ENCODE measurements at regions of chr19 and their contacts with region 1.

Region 1: DNA sequence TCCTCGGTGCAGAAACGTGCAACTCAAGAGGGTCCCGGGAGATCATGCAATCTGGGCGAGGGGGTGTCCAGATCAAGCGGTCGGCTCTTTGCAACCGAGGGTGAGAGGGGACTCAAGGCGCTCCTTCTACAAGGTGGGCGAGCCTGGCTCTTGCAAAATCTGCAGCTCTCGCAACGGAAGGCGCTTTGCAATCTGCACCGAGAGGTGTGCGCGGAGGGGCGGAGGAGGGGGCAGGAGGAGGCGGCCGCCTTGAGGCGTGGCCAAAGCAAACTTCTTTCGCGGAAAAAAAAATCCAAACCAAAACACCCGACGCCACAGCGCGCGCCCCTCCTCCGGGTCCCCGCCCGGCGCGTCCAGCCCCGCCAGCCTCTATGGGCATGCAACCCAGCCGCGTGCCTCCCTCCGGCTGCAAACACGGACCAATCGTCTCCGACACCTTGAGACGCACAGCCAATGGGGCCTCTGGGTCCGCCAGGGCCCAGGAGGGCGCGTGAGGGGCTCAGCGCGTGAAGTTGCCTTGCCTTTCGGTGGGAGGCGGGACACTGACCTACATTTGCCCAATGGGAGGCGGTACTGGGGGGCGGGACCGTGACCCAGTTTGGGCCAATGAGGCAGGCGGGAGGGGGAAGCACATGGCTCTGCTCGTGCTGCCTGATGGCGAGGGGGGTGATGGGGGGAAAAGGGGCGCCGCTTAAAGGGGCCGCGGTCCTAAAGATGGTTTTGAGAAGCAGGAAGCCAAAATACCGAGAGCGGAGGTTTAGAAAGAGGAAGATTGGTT is at the start of gene DBP:
- DNase-seq: peak; percentile 99 to 100 (median 100)
- ATAC-seq: peak; percentile 70
- H3K4me3 ChIP-seq: peak within 1 kb of the TSS; percentile 76 to 97
- H3K4me3 Mint-ChIP-seq: peak within 1 kb of the TSS; percentile 98
- H3K27ac ChIP-seq: peak within 1 kb of the TSS; percentile 93 to 95
- H3K27ac Mint-ChIP-seq: peak within 1 kb of the TSS; percentile 98
- H3K4me1 ChIP-seq: peaks cover 43% of the 10 kb centered on the region
- H3K4me1 Mint-ChIP-seq: peaks cover 43% of the 10 kb centered on the region
- H3K27me3 ChIP-seq: no peaks in the 10 kb centered on the region
- H3K27me3 Mint-ChIP-seq: no peaks in the 10 kb centered on the region
- CTCF ChIP-seq: no peak
- total RNA-seq, gene DBP: 24.8 to 25.6 TPM

Region 2: DNA sequence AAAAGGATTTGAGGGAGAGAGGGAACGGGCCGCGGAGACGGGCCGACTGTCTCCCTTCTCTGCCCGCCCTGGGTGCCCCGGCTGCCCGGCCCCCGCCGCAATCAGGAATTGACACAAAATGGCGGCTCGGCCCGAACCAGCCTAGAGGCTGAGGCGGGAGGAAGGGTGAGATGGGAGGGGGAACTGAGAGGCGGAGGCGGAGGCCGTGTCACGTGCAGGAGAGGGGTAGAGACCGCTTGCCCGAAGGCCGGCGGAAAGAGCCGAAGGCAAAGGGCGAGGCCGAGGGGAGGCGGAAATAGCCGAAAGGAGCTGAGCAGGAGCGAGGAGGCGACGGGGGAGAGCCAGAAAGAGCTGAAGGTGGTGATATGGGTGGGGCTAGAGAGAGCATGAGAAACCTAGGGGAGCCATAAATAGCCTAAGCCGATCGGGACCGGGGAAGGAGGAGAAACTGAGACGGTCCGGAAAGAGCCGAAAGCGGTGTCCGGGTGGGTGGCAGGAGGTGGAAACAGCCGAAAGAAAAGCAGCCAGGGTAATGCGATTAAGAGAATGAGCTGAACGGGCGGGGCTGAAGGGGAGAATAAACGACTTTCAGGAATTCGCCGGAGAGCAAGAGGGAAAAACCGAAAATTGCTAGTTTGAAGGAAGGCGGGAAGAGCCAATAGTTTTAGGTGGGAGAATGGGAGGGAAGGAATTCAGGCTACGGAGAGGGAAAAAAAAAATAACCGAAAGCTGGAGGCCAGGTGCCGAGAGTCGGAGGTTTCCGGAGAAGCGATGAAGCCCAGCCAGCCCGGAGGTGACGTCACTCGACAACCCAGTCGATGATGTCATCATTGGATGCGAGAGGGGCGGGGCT is 1524.1 kb before region 1 on chr19 and contains the start of gene ZC3H4:
- CTCF ChIA-PET with region 1: no interaction called
- POLR2A ChIA-PET with region 1: no interaction called
- intact Hi-C with region 1: loop called in 1 of 2 experiments (anchors 10 kb)
- DNase-seq: peak; percentile 98 to 100 (median 99)
- ATAC-seq: peak; percentile 82
- H3K4me3 ChIP-seq: peak within 1 kb of the TSS; percentile 83 to 94
- H3K4me3 Mint-ChIP-seq: peak within 1 kb of the TSS; percentile 96
- H3K27ac ChIP-seq: peak within 1 kb of the TSS; percentile 99
- H3K27ac Mint-ChIP-seq: peak within 1 kb of the TSS; percentile 99
- H3K4me1 ChIP-seq: peaks cover 29% of the 10 kb centered on the region
- H3K4me1 Mint-ChIP-seq: peaks cover 32% of the 10 kb centered on the region
- H3K27me3 ChIP-seq: no peaks in the 10 kb centered on the region
- H3K27me3 Mint-ChIP-seq: no peaks in the 10 kb centered on the region
- CTCF ChIP-seq: no peak
- total RNA-seq, gene ZC3H4: 30.0 to 33.0 TPM

Region 3: GRCh38 chr19:48333467-48334384 is 303.6 kb before region 1 on chr19:
- CTCF ChIA-PET with region 1: no interaction called
- POLR2A ChIA-PET with region 1: no interaction called
- intact Hi-C with region 1: loop called (anchors 2 to 5 kb)
- DNase-seq: peak; percentile 88 to 97 (median 93)
- ATAC-seq: peak; percentile 55
- H3K4me3 ChIP-seq: peak overlapping the region; percentile 73 to 78
- H3K4me3 Mint-ChIP-seq: peak overlapping the region; percentile 94
- H3K27ac ChIP-seq: peak overlapping the region; percentile 65 to 98
- H3K27ac Mint-ChIP-seq: peak overlapping the region; percentile 96
- H3K4me1 ChIP-seq: peaks cover 41% of the 10 kb centered on the region
- H3K4me1 Mint-ChIP-seq: peaks cover 51% of the 10 kb centered on the region
- H3K27me3 ChIP-seq: no peaks in the 10 kb centered on the region
- H3K27me3 Mint-ChIP-seq: no peaks in the 10 kb centered on the region
- CTCF ChIP-seq: peak; percentile 79

Region 4: GRCh38 chr19:48618916-48619691 is 18.3 kb before region 1 on chr19 and contains the starts of genes RPL18 and SPHK2:
- CTCF ChIA-PET with region 1: interaction called, 11 read pairs
- POLR2A ChIA-PET with region 1: interaction called, 78 read pairs
- intact Hi-C with region 1: loop called (anchors 1 kb)
- DNase-seq: peak; percentile 88 to 99 (median 94)
- ATAC-seq: peak; percentile 70
- H3K4me3 ChIP-seq: peak within 1 kb of the TSS; percentile 99
- H3K4me3 Mint-ChIP-seq: peak within 1 kb of the TSS; percentile 97
- H3K27ac ChIP-seq: peak within 1 kb of the TSS; percentile 92 to 94
- H3K27ac Mint-ChIP-seq: peak within 1 kb of the TSS; percentile 99
- H3K4me1 ChIP-seq: peaks cover 37% of the 10 kb centered on the region
- H3K4me1 Mint-ChIP-seq: peaks cover 57% of the 10 kb centered on the region
- H3K27me3 ChIP-seq: no peaks in the 10 kb centered on the region
- H3K27me3 Mint-ChIP-seq: no peaks in the 10 kb centered on the region
- CTCF ChIP-seq: no peak
- total RNA-seq, gene RPL18: 2,604 to 2,657 TPM
- total RNA-seq, gene SPHK2: 15.6 to 17.6 TPM

Region 5: DNA sequence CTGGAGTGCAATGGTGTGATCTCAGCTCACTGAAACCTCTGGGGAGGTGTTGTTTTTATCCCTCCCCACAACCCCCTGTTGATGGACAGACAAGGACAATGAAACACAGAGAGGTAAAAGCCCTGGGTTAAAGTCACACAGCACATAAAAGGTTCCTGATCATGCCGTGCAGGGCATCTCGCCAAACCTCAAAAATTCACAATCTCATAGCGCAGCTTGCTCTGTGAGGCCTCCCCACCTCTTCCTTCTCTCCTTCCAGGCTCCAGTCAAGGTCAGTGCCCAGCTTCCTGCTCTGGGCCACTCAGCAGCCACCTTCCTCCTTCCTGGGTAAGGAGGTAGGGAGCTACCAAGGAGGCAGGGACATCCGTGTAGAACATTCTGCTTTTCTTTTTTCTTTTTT is 60.7 kb after region 1 on chr19:
- CTCF ChIA-PET with region 1: no interaction called
- POLR2A ChIA-PET with region 1: no interaction called
- intact Hi-C with region 1: no loop called
- DNase-seq: no peak
- ATAC-seq: no peak
- H3K4me3 ChIP-seq: no peak overlapping the region
- H3K4me3 Mint-ChIP-seq: no peak overlapping the region
- H3K27ac ChIP-seq: no peak overlapping the region
- H3K27ac Mint-ChIP-seq: no peak overlapping the region
- H3K4me1 ChIP-seq: peaks cover 11% of the 10 kb centered on the region
- H3K4me1 Mint-ChIP-seq: peaks cover 12% of the 10 kb centered on the region
- H3K27me3 ChIP-seq: peaks cover 0 to 11% of the 10 kb centered on the region in 2 experiments
- H3K27me3 Mint-ChIP-seq: peaks cover 19% of the 10 kb centered on the region
- CTCF ChIP-seq: no peak

Region 6: DNA sequence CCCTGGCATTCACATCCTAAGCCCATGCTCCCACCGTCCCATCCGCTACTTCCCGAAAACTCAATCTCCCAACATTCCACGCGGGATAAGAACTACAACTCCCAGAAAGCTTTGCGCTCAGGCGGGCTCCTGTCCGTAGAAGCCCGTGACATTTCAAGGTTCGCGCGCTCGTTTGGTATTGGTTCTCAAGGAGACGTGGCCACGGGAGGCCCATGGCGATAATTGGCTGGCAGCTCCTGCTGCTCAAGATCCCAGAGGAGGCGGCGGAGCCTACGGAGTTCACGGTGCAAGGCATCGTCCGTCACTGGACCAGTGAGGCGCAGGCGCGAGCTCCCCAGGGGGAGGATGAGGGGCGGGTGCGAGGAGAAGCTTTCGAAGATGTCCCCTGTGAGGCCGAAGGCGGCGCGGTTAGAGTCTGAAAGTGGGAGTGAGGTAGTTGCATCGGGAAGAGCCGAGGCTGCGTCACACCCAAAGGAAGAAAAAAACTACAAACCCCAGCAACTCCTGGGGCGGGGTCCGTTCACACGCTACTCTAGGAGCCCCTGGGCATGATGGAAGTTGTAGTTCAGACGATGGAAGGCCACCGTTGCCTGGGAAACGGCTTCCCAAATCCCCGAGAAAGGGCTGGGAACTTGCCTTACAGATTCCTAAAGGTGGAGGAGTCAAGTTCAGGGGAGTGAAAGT is 83.4 kb after region 1 on chr19:
- CTCF ChIA-PET with region 1: no interaction called
- POLR2A ChIA-PET with region 1: no interaction called
- intact Hi-C with region 1: loop called in 1 of 2 experiments (anchors 2 kb)
- DNase-seq: peak; percentile 81 to 96 (median 90)
- ATAC-seq: peak; percentile 80
- H3K4me3 ChIP-seq: peak overlapping the region; percentile 65 to 69
- H3K4me3 Mint-ChIP-seq: peak overlapping the region; percentile 96
- H3K27ac ChIP-seq: peak overlapping the region; percentile 52 to 88
- H3K27ac Mint-ChIP-seq: peak overlapping the region; percentile 96
- H3K4me1 ChIP-seq: peaks cover 16% of the 10 kb centered on the region
- H3K4me1 Mint-ChIP-seq: peaks cover 24% of the 10 kb centered on the region
- H3K27me3 ChIP-seq: no peaks in the 10 kb centered on the region
- H3K27me3 Mint-ChIP-seq: no peaks in the 10 kb centered on the region
- CTCF ChIP-seq: no peak

Region 7: GRCh38 chr19:49766007-49766937 is 1128.9 kb after region 1 on chr19:
- CTCF ChIA-PET with region 1: no interaction called
- POLR2A ChIA-PET with region 1: no interaction called
- intact Hi-C with region 1: loop called in 1 of 2 experiments (anchors 5 kb)
- DNase-seq: peak; percentile 97 to 100 (median 99)
- ATAC-seq: peak; percentile 87
- H3K4me3 ChIP-seq: peak overlapping the region; percentile 62 to 76
- H3K4me3 Mint-ChIP-seq: peak overlapping the region; percentile 82
- H3K27ac ChIP-seq: peak overlapping the region; percentile 66 to 87
- H3K27ac Mint-ChIP-seq: peak overlapping the region; percentile 93
- H3K4me1 ChIP-seq: peaks cover 24% of the 10 kb centered on the region
- H3K4me1 Mint-ChIP-seq: peaks cover 38% of the 10 kb centered on the region
- H3K27me3 ChIP-seq: no peaks in the 10 kb centered on the region
- H3K27me3 Mint-ChIP-seq: no peaks in the 10 kb centered on the region
- CTCF ChIP-seq: no peak

Measured in CD8-positive, alpha-beta T cell (primary cell).